ENCODE measurements at regions of chr1 and their contacts with region 1.

Region 1: GRCh38 chr1:28602536-28603439 is 10.7 kb downstream of the RAB42 start:
- DNase-seq: peak; percentile 80
- H3K4me3 ChIP-seq: no peak overlapping the region; a peak in 1 of 4 replicates
- H3K27ac ChIP-seq: peak overlapping the region in 1 of 2 experiments; percentile 69; a peak in 2 of 4 replicates
- H3K4me1 ChIP-seq: peaks cover 0 to 13% of the 10 kb centered on the region in 2 experiments; a peak in 3 of 4 replicates
- H3K27me3 ChIP-seq: no peaks in the 10 kb centered on the region
- CTCF ChIP-seq: peak; percentile 86
- EP300 ChIP-seq: no peak
- RAD21 ChIP-seq: peak; percentile 92

Region 2: GRCh38 chr1:28359592-28360239 is 243.1 kb before region 1 on chr1:
- CTCF ChIA-PET with region 1: interaction called, 48 read pairs
- POLR2A ChIA-PET with region 1: no interaction called
- DNase-seq: peak; percentile 75
- H3K4me3 ChIP-seq: peak overlapping the region in 1 of 2 experiments; percentile 39; a peak in 1 of 4 replicates
- H3K27ac ChIP-seq: no peak overlapping the region
- H3K4me1 ChIP-seq: no peaks in the 10 kb centered on the region
- H3K27me3 ChIP-seq: no peaks in the 10 kb centered on the region
- CTCF ChIP-seq: peak; percentile 80
- EP300 ChIP-seq: no peak
- RAD21 ChIP-seq: peak; percentile 78

Region 3: DNA sequence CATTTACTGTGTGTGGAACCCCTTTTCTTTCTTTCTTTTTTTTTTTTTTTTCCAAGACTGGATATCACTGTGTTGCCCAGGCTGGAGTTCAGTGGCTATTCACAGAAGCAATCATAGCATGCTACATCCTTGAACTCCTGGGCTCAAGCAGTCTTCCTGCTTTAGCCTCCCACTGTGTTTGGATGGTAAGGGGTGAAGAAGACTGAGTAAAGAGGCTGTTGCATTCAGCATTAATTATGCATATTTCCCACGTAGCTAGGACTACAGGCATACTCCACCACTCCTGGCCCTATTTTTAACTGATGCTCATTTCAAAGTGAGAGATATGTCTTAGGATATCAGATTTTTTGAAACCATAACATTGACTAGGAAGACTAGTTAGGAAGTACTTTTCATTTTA is 193.7 kb before region 1 on chr1:
- CTCF ChIA-PET with region 1: interaction called, 10 read pairs
- POLR2A ChIA-PET with region 1: no interaction called
- DNase-seq: no peak
- H3K4me3 ChIP-seq: no peak overlapping the region
- H3K27ac ChIP-seq: 0 out of 4 replicates have a peak overlapping the region, but pooled peaks of 1 of the 2 experiments have one; percentile 10
- H3K4me1 ChIP-seq: peaks cover 0 to 2% of the 10 kb centered on the region in 2 experiments; a peak in 1 of 4 replicates
- H3K27me3 ChIP-seq: no peaks in the 10 kb centered on the region
- CTCF ChIP-seq: no peak
- EP300 ChIP-seq: no peak
- RAD21 ChIP-seq: no peak

Region 4: DNA sequence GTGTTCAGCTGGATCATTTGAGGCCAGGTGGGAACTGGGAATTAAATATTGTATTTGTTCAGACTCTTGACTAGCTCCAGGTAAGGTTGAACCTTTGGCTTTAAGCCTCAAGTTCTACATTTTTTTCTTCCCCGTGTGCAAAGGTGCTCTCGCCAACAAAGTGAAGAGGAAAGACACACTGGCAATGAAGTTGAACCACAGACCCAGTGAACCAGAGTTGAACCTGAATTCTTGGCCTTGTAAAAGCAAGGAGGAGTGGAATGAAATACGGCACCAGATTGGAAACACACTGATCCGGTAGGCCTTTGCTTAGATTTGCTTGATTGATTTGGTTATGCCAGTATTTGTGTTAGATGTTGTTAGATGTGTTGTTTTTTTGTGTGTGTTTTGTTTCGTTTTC is 122.5 kb before region 1 on chr1:
- CTCF ChIA-PET with region 1: no interaction called
- POLR2A ChIA-PET with region 1: no interaction called
- DNase-seq: no peak
- H3K4me3 ChIP-seq: no peak overlapping the region
- H3K27ac ChIP-seq: no peak overlapping the region
- H3K4me1 ChIP-seq: no peaks in the 10 kb centered on the region
- H3K27me3 ChIP-seq: no peaks in the 10 kb centered on the region
- CTCF ChIP-seq: no peak
- EP300 ChIP-seq: no peak
- RAD21 ChIP-seq: no peak

Region 5: GRCh38 chr1:28518000-28518744 is 84.6 kb before region 1 on chr1:
- CTCF ChIA-PET with region 1: interaction called, 46 read pairs
- POLR2A ChIA-PET with region 1: interaction called, 3 read pairs
- DNase-seq: peak; percentile 96
- H3K4me3 ChIP-seq: peak overlapping the region; percentile 59 to 70
- H3K27ac ChIP-seq: peak overlapping the region; percentile 73 to 76
- H3K4me1 ChIP-seq: peaks cover 4 to 12% of the 10 kb centered on the region in 2 experiments; a peak in 2 of 4 replicates
- H3K27me3 ChIP-seq: no peaks in the 10 kb centered on the region
- CTCF ChIP-seq: peak; percentile 95
- EP300 ChIP-seq: no peak
- RAD21 ChIP-seq: peak; percentile 78

Region 6: DNA sequence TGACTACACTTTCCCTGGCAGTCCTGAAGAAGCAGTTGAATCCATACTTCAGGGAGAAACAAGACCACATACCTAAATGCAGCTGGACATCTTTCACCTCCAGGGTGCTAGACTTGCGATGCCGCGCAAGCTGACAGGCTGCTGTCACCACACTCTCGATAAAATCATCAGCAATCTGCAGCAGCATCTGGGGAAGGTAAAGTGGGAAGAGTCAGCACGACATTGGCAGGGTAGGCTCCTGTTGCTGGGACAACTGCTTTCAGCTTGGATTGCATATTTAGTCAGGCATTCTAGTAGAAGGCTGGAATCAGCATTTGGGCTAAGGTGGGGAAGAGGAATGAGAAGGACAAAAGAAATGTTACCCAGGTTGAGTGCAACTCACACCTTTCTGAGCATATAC is 10.4 kb after region 1 on chr1:
- CTCF ChIA-PET with region 1: interaction called, 11 read pairs
- POLR2A ChIA-PET with region 1: no interaction called
- DNase-seq: no peak
- H3K4me3 ChIP-seq: no peak overlapping the region
- H3K27ac ChIP-seq: no peak overlapping the region
- H3K4me1 ChIP-seq: no peaks in the 10 kb centered on the region
- H3K27me3 ChIP-seq: no peaks in the 10 kb centered on the region
- CTCF ChIP-seq: no peak
- EP300 ChIP-seq: no peak
- RAD21 ChIP-seq: no peak

Region 7: DNA sequence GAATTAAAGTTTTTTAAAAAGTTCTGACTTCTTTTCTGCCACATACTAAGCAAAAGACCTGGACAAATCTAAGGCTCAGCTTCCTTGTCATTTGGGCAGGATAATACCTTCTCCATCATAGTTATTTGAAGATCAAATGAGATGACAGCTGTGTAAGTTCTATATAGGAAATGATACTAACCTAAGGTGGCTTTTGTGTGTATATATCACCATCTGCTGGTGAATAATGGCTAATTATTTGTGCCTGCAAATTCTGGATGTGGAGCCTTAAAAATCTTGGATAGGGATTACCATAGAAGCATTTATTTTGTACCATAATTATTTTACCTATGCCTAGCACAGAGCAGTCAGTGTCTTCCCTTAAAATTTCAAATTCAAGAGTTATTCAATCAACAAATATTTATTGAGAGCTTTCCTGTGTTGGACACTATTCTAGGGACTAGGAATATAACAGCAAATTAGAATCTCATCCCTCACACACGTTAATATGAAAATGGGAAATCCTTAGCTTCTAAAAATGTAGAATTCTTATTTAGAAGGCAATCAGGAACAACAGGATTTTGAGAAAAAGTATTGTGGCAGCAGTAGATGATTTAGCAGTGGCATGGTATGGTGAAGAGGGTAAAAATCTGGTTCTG is 431.2 kb after region 1 on chr1:
- CTCF ChIA-PET with region 1: no interaction called
- POLR2A ChIA-PET with region 1: no interaction called
- DNase-seq: peak; percentile 61
- H3K4me3 ChIP-seq: no peak overlapping the region
- H3K27ac ChIP-seq: no peak overlapping the region
- H3K4me1 ChIP-seq: peaks cover 0 to 2% of the 10 kb centered on the region in 2 experiments; a peak in 2 of 4 replicates
- H3K27me3 ChIP-seq: no peaks in the 10 kb centered on the region
- CTCF ChIP-seq: peak; percentile 83
- EP300 ChIP-seq: no peak
- RAD21 ChIP-seq: peak; percentile 96

Measured in SK-N-SH (cell line).